ENCODE measurements at regions of chr7 and their contacts with region 1.

Region 1: DNA sequence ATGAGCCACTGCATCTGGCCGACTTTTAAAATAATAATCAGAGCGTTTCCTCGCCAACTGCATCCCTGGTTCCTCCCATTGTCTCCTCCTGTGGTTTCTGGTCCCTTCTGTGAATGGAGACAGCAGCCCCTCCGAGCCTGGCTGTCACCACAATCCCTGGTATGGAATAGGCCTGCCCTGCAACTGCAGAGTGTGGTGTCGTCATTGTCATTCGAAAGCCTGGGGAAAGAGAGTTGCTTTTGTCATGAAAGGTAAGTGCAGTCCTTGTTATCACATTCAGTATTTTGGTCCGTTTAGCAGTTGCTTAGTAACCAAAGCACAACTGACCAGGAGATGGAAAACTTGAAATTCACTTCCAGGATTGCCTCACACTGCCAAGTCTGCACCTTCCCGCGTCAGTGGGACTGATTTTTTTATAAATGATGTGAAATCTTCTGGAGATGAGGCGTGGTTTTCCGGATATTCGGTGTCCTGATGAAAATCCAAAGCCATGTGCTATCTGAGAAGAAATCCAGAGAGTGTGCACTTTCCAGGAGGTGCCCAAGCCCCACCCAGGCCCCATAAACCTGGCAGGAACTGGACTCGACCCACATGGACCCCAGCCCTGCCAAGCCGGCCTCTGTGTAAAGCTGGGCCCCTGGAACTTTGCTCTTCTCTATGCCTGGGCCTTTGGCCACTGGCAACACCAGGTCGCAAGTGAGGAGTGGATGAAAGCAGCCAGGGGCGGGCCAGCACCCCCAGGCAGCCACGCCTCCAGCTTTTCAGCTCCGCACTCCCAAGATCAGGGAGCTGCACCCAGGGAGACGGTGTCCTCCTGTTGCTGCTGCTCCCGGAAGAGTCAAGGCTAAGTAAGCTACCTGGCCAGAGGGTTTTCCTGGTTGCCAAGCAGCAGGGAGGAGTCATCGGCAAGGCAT is 133.7 kb upstream of the SH2B2 start:
- DNase-seq: peak; percentile 50
- ATAC-seq: peak; percentile 92

Region 2: GRCh38 chr7:102204212-102204611 is 51.3 kb after region 1 on chr7:
- intact Hi-C with region 1: loop called (anchors 5 kb)
- DNase-seq: no peak
- ATAC-seq: no peak